ENCODE measurements at regions of chr7 and their contacts with region 1.

Region 1: GRCh38 chr7:73822319-73823076 is 8.3 kb upstream of the CLDN4 start:
- DNase-seq: peak; percentile 99
- ATAC-seq: peak; percentile 92
- H3K4me3 ChIP-seq: peak overlapping the region; percentile 28; the same call in 1 of the 2 replicates
- H3K27ac ChIP-seq: peak overlapping the region; percentile 99
- H3K4me1 ChIP-seq: peaks cover 47% of the 10 kb centered on the region
- H3K27me3 ChIP-seq: no peaks in the 10 kb centered on the region
- CTCF ChIP-seq: no peak

Region 2: DNA sequence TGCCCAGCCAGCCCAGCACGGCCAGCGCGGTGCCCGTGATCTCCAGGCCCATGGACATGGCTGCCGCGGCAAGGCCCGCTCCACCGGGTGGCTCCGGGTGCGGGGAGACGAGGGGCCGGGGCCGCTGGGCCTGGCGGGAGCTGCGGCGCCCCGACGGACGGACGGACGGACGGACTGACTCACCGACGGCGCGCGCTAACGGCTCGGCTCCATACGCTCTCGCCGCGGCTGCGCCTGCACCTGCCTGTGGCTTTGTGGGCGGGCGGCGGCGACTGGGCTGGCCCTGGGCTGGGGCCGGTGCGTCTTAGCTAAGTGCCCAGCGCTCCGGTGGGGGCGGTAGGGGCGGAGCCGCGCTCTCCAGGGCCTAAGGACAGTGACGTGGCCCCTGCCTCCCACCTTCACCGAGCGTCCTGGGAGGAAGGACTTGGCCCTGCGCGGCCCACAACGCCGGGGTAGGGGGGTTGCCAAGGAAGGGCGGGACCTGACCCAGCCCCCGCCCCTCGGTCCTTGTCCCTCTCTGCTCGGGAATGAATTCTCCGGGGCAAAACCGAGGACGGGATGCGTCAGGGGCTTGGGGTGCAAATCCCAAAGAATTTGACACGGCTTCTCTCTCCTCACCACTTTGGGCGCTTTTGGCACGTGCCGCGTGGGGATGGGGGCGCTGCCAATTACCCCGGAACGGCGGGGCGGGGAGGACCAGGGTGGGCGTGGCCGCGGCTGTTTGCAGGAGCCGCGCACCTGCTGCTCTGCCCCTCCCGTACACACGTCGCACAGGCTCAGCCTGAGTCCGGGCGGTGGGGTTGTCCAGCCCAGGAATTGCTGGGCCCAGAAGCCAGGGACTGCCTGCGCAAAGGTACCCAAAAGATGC is 52.3 kb before region 1 on chr7 and contains the start of gene CLDN3:
- CTCF ChIA-PET with region 1: no interaction called
- POLR2A ChIA-PET with region 1: interaction called, 12 read pairs
- intact Hi-C with region 1: no loop called
- DNase-seq: peak; percentile 92
- ATAC-seq: peak; percentile 93
- H3K4me3 ChIP-seq: peak within 1 kb of the TSS; percentile 69
- H3K27ac ChIP-seq: peak within 1 kb of the TSS; percentile 39
- H3K4me1 ChIP-seq: peaks cover 23% of the 10 kb centered on the region; the same call in 1 of the 2 replicates
- H3K27me3 ChIP-seq: no peaks in the 10 kb centered on the region
- CTCF ChIP-seq: no peak
- total RNA-seq, gene CLDN3: 51.6 and 70.7 TPM in 2 replicates

Region 3: GRCh38 chr7:73842247-73842895 is 19.9 kb after region 1 on chr7 and contains the start of gene METTL27:
- CTCF ChIA-PET with region 1: interaction called, 13 read pairs
- POLR2A ChIA-PET with region 1: interaction called, 3 read pairs
- intact Hi-C with region 1: no loop called
- DNase-seq: peak; percentile 91
- ATAC-seq: peak; percentile 94
- H3K4me3 ChIP-seq: peak within 1 kb of the TSS; percentile 92
- H3K27ac ChIP-seq: 0 out of 2 replicates have a peak within 1 kb of the TSS, but pooled peaks have one; percentile 13
- H3K4me1 ChIP-seq: peaks cover 13% of the 10 kb centered on the region; the same call in 1 of the 2 replicates
- H3K27me3 ChIP-seq: no peaks in the 10 kb centered on the region
- CTCF ChIP-seq: no peak
- total RNA-seq, gene METTL27: 0.35 and 3.3 TPM in 2 replicates

Region 4: DNA sequence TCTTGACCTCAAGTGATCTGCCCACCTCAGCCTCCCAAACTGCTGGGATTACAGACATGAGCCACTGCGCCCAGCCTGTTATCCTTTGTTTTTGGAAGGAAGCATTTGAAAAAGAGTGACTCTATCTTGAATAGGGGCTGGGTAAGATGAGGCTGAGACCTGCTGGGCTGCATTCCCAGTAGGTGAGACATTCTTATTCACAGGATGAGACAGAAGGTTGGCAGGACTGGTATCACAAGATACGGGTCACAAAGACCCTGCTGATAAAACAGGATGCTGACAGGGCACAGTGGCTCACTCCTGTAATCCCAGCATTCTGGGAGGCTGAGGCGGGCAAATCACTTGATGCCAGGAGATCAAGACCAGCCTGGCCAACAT is 311.2 kb after region 1 on chr7:
- CTCF ChIA-PET with region 1: no interaction called
- POLR2A ChIA-PET with region 1: interaction called, 10 read pairs
- intact Hi-C with region 1: no loop called
- DNase-seq: peak; percentile 96
- ATAC-seq: peak; percentile 85
- H3K4me3 ChIP-seq: no peak overlapping the region
- H3K27ac ChIP-seq: peak overlapping the region; percentile 57
- H3K4me1 ChIP-seq: peaks cover 6% of the 10 kb centered on the region; the same call in 1 of the 2 replicates
- H3K27me3 ChIP-seq: no peaks in the 10 kb centered on the region
- CTCF ChIP-seq: no peak

Region 5: DNA sequence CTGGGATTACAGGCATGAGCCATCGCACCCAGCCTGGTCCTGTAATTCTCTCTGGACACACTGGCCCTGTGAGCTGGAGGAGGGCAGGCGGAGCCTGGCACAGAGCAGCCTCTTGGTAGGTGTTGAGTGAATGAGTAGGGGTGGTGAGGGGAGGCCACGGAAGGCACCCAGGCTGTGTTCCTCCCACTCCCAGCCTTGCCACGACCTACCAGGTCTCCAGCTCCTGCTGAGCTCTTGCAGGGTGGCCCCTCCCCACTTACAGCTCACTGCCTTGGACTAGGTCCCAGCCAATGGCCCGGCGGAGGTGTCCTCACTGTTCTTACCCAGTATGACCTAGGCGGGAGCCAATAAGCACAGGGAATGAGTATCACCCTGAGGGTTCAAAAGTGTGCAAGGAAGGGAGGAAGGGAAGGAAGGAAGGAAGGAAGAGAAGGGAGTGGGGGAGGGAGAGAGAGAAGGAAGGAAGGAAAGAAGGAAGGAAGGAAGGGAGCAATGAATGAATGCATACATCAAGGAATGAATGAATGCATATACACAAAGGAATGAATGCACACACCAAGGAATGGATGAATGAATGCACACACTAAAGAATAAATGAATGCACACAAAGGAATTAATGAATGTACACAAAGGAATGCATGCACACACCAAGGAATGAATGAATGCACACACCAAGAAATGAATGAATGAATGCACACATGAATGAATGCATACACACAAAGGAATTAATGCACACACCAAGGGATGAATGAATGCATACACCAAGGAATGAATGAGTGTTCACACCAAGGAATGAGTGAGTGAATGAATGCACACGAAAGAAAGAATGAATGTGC is 676.7 kb after region 1 on chr7:
- CTCF ChIA-PET with region 1: no interaction called
- POLR2A ChIA-PET with region 1: no interaction called
- intact Hi-C with region 1: no loop called
- DNase-seq: no peak
- ATAC-seq: no peak
- H3K4me3 ChIP-seq: no peak overlapping the region
- H3K27ac ChIP-seq: no peak overlapping the region
- H3K4me1 ChIP-seq: no peaks in the 10 kb centered on the region
- H3K27me3 ChIP-seq: no peaks in the 10 kb centered on the region
- CTCF ChIP-seq: no peak